ENCODE measurements at regions of chr2 and their contacts with region 1.

Region 1: GRCh38 chr2:214809751-214810564 is 475 bp upstream of the BARD1 start:
- DNase-seq: peak; percentile 100
- ATAC-seq: peak; percentile 98

Region 2: DNA sequence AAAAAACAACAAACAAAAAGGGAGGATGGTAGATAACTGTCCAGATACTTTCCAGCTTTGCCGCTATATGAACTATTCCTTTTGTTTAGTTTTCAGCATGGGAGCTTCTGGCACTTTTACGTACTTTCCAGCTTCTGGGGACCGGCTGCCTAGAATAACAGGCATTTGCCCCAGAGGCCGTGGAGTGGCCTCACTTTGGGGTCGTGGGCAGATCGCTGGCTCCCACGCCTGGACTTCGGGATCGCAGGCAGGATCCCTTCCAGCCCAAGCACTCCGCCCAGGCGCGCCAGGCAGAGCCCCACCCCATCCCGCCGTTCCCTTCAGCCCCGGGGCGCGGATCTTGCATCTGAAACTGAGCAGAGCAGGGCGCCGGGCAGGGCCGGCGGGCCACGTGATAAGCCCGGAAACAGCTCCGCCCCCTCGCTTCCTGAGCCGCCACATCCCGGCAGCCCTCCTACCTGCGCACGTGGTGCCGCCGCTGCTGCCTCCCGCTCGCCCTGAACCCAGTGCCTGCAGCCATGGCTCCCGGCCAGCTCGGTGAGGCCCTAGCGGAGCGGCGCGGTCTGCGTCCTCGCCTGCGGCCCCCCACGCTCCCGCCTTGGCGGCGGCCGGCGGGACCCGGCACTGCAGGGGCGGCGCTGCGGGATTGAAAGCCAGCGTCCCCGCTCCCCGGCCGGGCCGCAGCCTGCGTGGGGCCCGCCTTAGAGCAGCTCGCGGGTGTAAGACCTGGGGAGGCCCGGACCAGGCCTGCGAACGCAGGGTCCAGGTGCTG is 501.9 kb after region 1 on chr2 and contains the start of gene ATIC:
- intact Hi-C with region 1: loop called (anchors 5 kb)
- DNase-seq: peak; percentile 97
- ATAC-seq: peak; percentile 99
- total RNA-seq, gene ATIC: 55.0 TPM

Measured in Right ventricle myocardium inferior (tissue), 1 donor.